Left cardiac atrium (tissue), 4 donors: ENCODE measurements at regions of chr18 and their contacts with region 1.

Region 1: DNA sequence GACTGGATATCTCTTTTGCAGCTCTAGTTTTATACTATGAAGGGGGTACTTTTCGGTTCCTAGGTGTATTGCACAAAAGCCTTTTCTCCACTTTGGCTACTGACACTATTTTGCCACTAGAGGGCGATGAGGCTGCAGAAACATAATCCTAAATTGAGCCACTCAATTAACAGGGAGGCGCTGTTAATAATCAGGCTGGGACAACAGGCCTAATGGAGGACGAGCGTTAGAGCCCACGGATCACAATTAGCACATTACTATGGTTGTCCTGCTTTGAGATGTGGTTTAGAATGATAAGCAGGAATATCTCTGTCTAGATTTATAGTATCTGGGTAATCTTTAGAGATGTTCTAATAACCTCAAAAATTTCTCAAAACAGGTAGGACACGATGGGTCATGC is 62.2 kb upstream of the PMAIP1 start:
- DNase-seq: no peak
- ATAC-seq: peak in 1 of 2 donors; percentile 48

Region 2: GRCh38 chr18:59783138-59783537 is 54.4 kb before region 1 on chr18:
- intact Hi-C with region 1: no loop called
- DNase-seq: no peak
- ATAC-seq: peak; percentile 19 to 40

Region 3: DNA sequence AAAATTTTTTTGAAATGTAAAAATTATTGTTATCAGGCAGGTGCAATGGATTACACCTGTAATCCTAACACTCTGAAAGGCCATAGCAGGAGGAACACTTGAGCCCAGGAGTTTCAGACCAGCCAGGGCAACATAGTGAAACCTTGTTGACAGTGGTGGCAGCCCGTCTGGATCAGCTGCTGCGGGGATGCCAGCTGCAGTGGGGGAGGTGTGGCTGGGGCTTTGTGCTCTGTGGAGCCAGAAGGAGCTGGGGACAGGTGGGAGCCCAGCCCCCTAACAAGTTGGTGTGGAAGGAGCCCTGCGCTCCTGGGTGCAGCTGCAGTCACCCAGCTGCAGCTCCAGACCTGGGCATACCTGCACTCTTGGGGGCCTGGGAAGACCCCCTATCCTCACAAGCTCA is 717.4 kb after region 1 on chr18:
- intact Hi-C with region 1: loop called in 1 of 2 experiments (anchors 5 kb)
- DNase-seq: no peak
- ATAC-seq: no peak